ENCODE measurements at regions of chr1 and their contacts with region 1.

Region 1: GRCh38 chr1:40862008-40862863 is at the start of gene CITED4:
- DNase-seq: peak; percentile 93 to 99 (median 97)
- ATAC-seq: peak; percentile 94
- H3K4me3 ChIP-seq: peak within 1 kb of the TSS; percentile 82
- H3K4me3 Mint-ChIP-seq: peak within 1 kb of the TSS; percentile 95
- H3K27ac ChIP-seq: peak within 1 kb of the TSS; percentile 45 to 67
- H3K27ac Mint-ChIP-seq: peak within 1 kb of the TSS; percentile 96
- H3K4me1 ChIP-seq: peaks cover 20% of the 10 kb centered on the region
- H3K4me1 Mint-ChIP-seq: peaks cover 24% of the 10 kb centered on the region
- H3K27me3 ChIP-seq: no peaks in the 10 kb centered on the region
- H3K27me3 Mint-ChIP-seq: no peaks in the 10 kb centered on the region
- CTCF ChIP-seq: no peak
- total RNA-seq, gene CITED4: 51.6 to 52.0 TPM

Region 2: DNA sequence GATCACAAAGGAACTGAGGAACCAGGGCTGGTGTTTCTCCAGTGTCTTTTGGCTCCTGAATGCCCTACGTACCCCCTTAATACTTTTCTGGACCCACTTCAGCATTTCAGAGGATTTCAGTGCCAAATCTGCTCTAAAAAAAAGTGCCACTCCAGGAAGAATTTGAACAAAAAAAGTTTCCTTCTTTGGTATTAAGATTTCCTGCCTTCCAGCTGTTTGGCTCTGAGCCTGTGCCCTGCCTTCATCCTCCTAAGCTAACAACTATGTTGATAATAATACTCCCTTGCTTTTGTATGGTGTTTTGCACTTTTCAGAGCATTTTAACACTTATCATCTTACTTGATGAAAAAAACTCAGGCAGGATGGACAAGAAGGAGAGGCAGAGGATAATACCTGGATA is 185.7 kb before region 1 on chr1:
- CTCF ChIA-PET with region 1: no interaction called
- POLR2A ChIA-PET with region 1: no interaction called
- intact Hi-C with region 1: no loop called
- DNase-seq: no peak
- ATAC-seq: no peak
- H3K4me3 ChIP-seq: no peak overlapping the region
- H3K4me3 Mint-ChIP-seq: no peak overlapping the region
- H3K27ac ChIP-seq: no peak overlapping the region
- H3K27ac Mint-ChIP-seq: no peak overlapping the region
- H3K4me1 ChIP-seq: no peaks in the 10 kb centered on the region
- H3K4me1 Mint-ChIP-seq: no peaks in the 10 kb centered on the region
- H3K27me3 ChIP-seq: no peaks in the 10 kb centered on the region
- H3K27me3 Mint-ChIP-seq: peaks cover 3% of the 10 kb centered on the region
- CTCF ChIP-seq: no peak

Region 3: DNA sequence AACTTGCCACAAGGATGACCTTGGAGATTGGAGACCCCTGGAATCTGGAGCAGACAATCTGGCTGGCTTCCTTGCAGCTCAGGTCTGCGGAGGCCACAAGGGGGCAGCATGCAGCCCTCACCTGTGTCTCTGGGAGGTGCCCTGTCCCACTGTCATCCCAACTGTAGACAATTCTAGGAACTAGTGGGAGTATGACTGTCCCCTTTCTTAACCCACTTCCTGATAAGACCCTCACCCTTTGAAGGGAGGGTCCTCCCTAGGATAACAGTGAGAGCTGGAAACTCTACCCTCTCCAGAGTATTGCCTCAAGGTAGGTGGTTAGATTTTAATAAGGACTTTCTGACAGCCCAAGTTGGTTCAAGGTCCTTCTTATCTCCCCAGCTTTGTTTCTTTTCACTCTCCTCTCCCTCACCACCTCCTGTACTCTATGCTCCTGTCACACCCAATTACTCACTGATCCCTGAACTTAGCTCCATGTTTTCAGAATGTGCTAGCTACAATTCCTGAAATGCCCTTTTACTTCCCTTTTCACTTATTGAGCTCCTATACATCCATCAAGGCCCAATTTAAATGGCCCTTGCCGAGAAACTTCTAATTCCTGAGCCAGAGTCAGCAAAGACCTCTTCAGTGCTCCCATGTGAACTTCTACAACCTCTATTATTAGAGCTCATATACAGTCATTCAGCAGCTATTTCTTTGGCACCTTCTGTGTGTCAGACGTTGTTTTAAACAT is 87.8 kb before region 1 on chr1:
- CTCF ChIA-PET with region 1: interaction called, 11 read pairs
- POLR2A ChIA-PET with region 1: interaction called, 4 read pairs
- intact Hi-C with region 1: no loop called
- DNase-seq: peak; percentile 51 to 80 (median 61)
- ATAC-seq: peak; percentile 64
- H3K4me3 ChIP-seq: no peak overlapping the region
- H3K4me3 Mint-ChIP-seq: no peak overlapping the region
- H3K27ac ChIP-seq: no peak overlapping the region
- H3K27ac Mint-ChIP-seq: no peak overlapping the region
- H3K4me1 ChIP-seq: no peaks in the 10 kb centered on the region
- H3K4me1 Mint-ChIP-seq: no peaks in the 10 kb centered on the region
- H3K27me3 ChIP-seq: no peaks in the 10 kb centered on the region
- H3K27me3 Mint-ChIP-seq: no peaks in the 10 kb centered on the region
- CTCF ChIP-seq: peak; percentile 85

Region 4: GRCh38 chr1:40818264-40818961 is 43.8 kb before region 1 on chr1:
- CTCF ChIA-PET with region 1: no interaction called
- POLR2A ChIA-PET with region 1: interaction called, 10 read pairs
- intact Hi-C with region 1: loop called in 1 of 2 experiments (anchors 2 kb)
- DNase-seq: peak; percentile 80 to 95 (median 86)
- ATAC-seq: peak; percentile 96
- H3K4me3 ChIP-seq: peak overlapping the region; percentile 67
- H3K4me3 Mint-ChIP-seq: peak overlapping the region; percentile 92
- H3K27ac ChIP-seq: peak overlapping the region in 1 of 2 donors; percentile 41
- H3K27ac Mint-ChIP-seq: peak overlapping the region; percentile 88
- H3K4me1 ChIP-seq: peaks cover 18% of the 10 kb centered on the region
- H3K4me1 Mint-ChIP-seq: peaks cover 13% of the 10 kb centered on the region
- H3K27me3 ChIP-seq: no peaks in the 10 kb centered on the region
- H3K27me3 Mint-ChIP-seq: no peaks in the 10 kb centered on the region
- CTCF ChIP-seq: no peak

Region 5: DNA sequence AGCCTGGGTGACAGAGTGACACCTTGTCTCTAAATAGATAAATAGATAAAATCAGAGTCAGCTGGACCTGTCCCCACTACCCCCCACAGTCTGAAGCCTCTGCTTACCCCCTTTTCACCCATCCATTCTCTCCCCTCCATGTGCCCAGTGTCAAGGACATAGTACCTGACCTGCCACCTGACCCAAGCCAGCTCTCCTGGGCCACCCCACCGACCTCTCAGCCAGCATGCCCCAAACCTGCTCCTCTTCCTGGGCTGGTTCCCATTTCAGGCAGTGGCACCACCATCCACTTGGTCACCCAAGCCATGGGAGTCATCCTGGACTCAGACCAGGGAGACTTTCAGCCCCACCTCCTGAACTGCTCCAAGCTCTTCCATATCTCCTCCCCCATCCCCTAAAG is 28.3 kb before region 1 on chr1:
- CTCF ChIA-PET with region 1: no interaction called
- POLR2A ChIA-PET with region 1: no interaction called
- intact Hi-C with region 1: no loop called
- DNase-seq: no peak
- ATAC-seq: no peak
- H3K4me3 ChIP-seq: no peak overlapping the region
- H3K4me3 Mint-ChIP-seq: no peak overlapping the region
- H3K27ac ChIP-seq: no peak overlapping the region
- H3K27ac Mint-ChIP-seq: no peak overlapping the region
- H3K4me1 ChIP-seq: no peaks in the 10 kb centered on the region
- H3K4me1 Mint-ChIP-seq: peaks cover under 1% of the 10 kb centered on the region
- H3K27me3 ChIP-seq: no peaks in the 10 kb centered on the region
- H3K27me3 Mint-ChIP-seq: no peaks in the 10 kb centered on the region
- CTCF ChIP-seq: no peak

Region 6: GRCh38 chr1:40849801-40850592 is 12.2 kb before region 1 on chr1:
- CTCF ChIA-PET with region 1: interaction called, 6 read pairs
- POLR2A ChIA-PET with region 1: interaction called, 14 read pairs
- intact Hi-C with region 1: no loop called
- DNase-seq: peak; percentile 59 to 87 (median 72)
- ATAC-seq: peak; percentile 92
- H3K4me3 ChIP-seq: no peak overlapping the region
- H3K4me3 Mint-ChIP-seq: peak overlapping the region; percentile 30
- H3K27ac ChIP-seq: no peak overlapping the region
- H3K27ac Mint-ChIP-seq: no peak overlapping the region
- H3K4me1 ChIP-seq: peaks cover 7% of the 10 kb centered on the region
- H3K4me1 Mint-ChIP-seq: peaks cover 15% of the 10 kb centered on the region
- H3K27me3 ChIP-seq: no peaks in the 10 kb centered on the region
- H3K27me3 Mint-ChIP-seq: no peaks in the 10 kb centered on the region
- CTCF ChIP-seq: peak; percentile 90

Region 7: DNA sequence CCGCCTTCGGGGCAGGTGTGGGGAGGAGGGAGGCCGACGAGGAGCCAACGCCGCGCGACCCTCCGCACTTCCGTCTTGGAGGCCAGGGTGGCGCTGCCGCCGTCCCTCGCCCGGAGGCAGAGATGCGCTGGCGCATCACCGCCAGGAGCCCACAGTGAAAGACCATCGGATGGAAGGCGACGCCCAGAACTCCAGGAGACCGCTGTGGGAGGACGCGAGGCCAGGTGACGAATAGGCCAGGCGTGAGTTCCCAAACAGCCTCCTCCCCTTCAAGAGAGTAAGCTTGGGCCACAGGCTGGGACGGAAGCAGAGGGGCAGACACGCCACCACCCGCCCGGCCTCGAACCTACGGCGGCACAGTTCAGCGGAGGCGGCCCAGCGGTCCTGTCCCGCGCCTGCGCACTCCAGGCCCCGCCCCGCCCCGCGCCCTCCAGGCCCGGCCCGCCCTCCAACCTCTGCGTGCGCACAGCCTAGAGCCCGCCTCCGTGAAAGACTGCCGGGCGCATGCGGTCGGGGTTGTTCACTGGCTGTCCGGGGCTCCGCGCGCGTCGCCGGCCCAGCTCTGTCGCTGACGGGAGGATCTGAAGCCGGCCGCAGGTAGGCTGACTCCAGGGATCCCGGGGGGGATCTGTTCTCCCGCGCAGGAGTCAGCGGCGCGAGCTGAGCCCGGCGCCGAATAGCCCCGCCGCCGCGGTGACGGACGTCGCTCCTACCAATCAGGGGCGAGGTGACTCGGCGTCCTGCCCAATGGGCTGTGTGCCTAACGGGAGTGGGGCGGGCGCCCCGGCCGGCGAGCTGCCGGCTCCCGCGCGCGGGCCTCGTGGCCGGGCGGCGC is 117.2 kb after region 1 on chr1 and contains the start of gene CTPS1:
- CTCF ChIA-PET with region 1: no interaction called
- POLR2A ChIA-PET with region 1: interaction called, 42 read pairs
- intact Hi-C with region 1: loop called in 1 of 2 experiments (anchors 1 kb)
- DNase-seq: peak; percentile 92 to 98 (median 96)
- ATAC-seq: peak; percentile 86
- H3K4me3 ChIP-seq: peak within 1 kb of the TSS; percentile 82
- H3K4me3 Mint-ChIP-seq: peak within 1 kb of the TSS; percentile 90
- H3K27ac ChIP-seq: peak within 1 kb of the TSS; percentile 81 to 89
- H3K27ac Mint-ChIP-seq: peak within 1 kb of the TSS; percentile 89
- H3K4me1 ChIP-seq: peaks cover 25% of the 10 kb centered on the region
- H3K4me1 Mint-ChIP-seq: peaks cover 14% of the 10 kb centered on the region
- H3K27me3 ChIP-seq: no peaks in the 10 kb centered on the region
- H3K27me3 Mint-ChIP-seq: no peaks in the 10 kb centered on the region
- CTCF ChIP-seq: peak; percentile 12
- total RNA-seq, gene CTPS1: 37.1 to 37.4 TPM

Region 8: GRCh38 chr1:41200728-41201127 is 338.5 kb after region 1 on chr1:
- CTCF ChIA-PET with region 1: no interaction called
- POLR2A ChIA-PET with region 1: no interaction called
- intact Hi-C with region 1: no loop called
- DNase-seq: no peak
- ATAC-seq: no peak
- H3K4me3 ChIP-seq: no peak overlapping the region
- H3K4me3 Mint-ChIP-seq: no peak overlapping the region
- H3K27ac ChIP-seq: no peak overlapping the region
- H3K27ac Mint-ChIP-seq: no peak overlapping the region
- H3K4me1 ChIP-seq: no peaks in the 10 kb centered on the region
- H3K4me1 Mint-ChIP-seq: peaks cover 15% of the 10 kb centered on the region
- H3K27me3 ChIP-seq: no peaks in the 10 kb centered on the region
- H3K27me3 Mint-ChIP-seq: no peaks in the 10 kb centered on the region
- CTCF ChIP-seq: no peak